PC-3 (cell line): ENCODE measurements at regions of chr10 and their contacts with region 1.

Region 1: GRCh38 chr10:79068562-79069324 is at the start of gene ZMIZ1:
- DNase-seq: peak; percentile 100
- ATAC-seq: peak; percentile 47
- H3K4me3 ChIP-seq: peak within 1 kb of the TSS; percentile 66
- H3K27ac ChIP-seq: peak within 1 kb of the TSS; percentile 3
- H3K4me1 ChIP-seq: peaks cover 34% of the 10 kb centered on the region
- H3K27me3 ChIP-seq: no peaks in the 10 kb centered on the region
- CTCF ChIP-seq: peak; percentile 57
- total RNA-seq, gene ZMIZ1: 55.4 and 84.2 TPM in 2 replicates

Region 2: DNA sequence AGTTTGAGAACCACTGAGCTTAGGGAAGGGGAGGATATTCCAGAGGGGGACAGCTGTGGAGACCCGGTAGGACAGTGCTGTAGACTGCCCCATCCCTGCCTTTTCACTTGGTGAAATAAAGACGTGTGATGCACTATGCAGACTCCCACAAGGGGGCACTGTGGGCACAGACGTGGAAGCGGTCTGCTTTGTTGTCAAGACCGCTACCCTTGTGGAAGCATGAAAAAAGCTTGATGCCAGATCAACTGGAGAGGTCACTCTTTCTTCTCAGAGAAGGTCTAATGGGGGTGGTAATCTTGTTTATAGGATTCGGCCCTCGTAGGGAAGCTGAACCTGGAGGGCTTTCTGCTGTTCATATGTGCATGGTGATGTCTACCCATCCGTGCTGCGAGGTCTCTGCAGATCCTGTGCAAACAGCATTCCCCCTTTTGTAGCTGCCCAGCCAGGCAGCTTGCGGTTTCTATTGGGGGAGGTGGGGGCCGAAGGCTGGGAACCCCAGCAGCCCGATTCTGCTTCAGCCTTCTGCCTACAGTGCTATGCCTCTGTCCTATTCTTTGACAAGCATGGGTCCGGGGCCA is 1021.3 kb before region 1 on chr10:
- CTCF ChIA-PET with region 1: interaction called, 9 read pairs
- POLR2A ChIA-PET with region 1: no interaction called
- intact Hi-C with region 1: loop called (anchors 5 kb)
- DNase-seq: peak; percentile 100
- ATAC-seq: peak; percentile 75
- H3K4me3 ChIP-seq: no peak overlapping the region
- H3K27ac ChIP-seq: no peak overlapping the region
- H3K4me1 ChIP-seq: no peaks in the 10 kb centered on the region
- H3K27me3 ChIP-seq: no peaks in the 10 kb centered on the region
- CTCF ChIP-seq: peak; percentile 100

Region 3: GRCh38 chr10:78605800-78606350 is 462.9 kb before region 1 on chr10:
- CTCF ChIA-PET with region 1: no interaction called
- POLR2A ChIA-PET with region 1: no interaction called
- intact Hi-C with region 1: loop called (anchors 10 kb)
- DNase-seq: peak; percentile 99
- ATAC-seq: peak; percentile 100
- H3K4me3 ChIP-seq: no peak overlapping the region
- H3K27ac ChIP-seq: no peak overlapping the region
- H3K4me1 ChIP-seq: no peaks in the 10 kb centered on the region
- H3K27me3 ChIP-seq: 0 out of 2 replicates have a peak, but pooled peaks cover 5% of the 10 kb centered on the region
- CTCF ChIP-seq: peak; percentile 70

Region 4: GRCh38 chr10:78844960-78845607 is 223.7 kb before region 1 on chr10:
- CTCF ChIA-PET with region 1: no interaction called
- POLR2A ChIA-PET with region 1: no interaction called
- intact Hi-C with region 1: loop called (anchors 2 kb)
- DNase-seq: peak; percentile 53
- ATAC-seq: peak; percentile 53
- H3K4me3 ChIP-seq: no peak overlapping the region
- H3K27ac ChIP-seq: no peak overlapping the region
- H3K4me1 ChIP-seq: no peaks in the 10 kb centered on the region
- H3K27me3 ChIP-seq: 0 out of 2 replicates have a peak, but pooled peaks cover 23% of the 10 kb centered on the region
- CTCF ChIP-seq: peak; percentile 48; the same call in 1 of the 2 replicates

Region 5: DNA sequence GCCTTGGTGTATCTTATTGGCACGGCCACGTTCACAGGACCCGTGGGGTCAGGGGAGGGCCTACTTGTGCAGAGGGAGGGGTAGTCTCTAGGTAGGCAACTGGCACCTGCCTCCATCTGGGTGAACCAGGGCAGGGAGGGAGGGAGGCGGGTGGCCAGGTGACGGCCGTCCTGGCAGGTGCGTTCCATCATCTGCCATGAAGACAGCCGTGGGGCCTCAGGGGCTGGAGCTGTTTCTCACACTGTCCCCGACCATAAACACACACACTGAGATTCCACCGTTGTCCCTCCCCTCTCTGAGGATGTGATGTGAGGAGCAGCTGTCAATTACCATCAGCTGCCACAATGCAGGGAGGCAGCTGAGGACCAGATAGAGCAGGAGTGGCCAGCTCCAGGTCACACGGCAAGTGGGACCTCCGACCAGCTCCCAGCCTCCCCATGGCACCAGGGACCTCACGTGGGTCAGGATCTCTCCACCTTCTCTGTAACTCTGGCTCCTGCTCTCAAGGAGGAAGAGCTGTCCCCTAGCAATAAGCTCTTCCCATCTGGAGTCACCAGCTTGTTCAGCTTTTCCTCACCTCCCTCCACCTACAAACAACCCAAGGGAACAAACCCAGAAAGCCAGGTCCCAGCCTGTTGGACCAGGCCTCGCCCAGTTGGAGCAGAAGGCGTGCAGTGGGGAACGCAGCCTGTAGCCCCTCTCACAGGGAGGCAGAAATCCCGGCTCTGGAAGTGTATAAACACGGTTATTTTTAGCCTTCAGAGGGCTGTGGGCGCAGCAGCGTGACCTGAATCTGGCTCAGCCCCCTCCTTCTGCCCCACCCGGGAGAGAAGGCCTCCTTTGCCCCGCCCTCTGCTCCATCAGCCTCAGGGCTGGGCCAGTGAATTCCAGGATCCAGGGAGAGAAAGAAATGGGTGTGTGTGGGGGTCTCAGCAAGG is 33.1 kb after region 1 on chr10:
- CTCF ChIA-PET with region 1: interaction called, 3 read pairs
- POLR2A ChIA-PET with region 1: interaction called, 5 read pairs
- intact Hi-C with region 1: loop called (anchors 2 kb)
- DNase-seq: no peak
- ATAC-seq: peak; percentile 18
- H3K4me3 ChIP-seq: no peak overlapping the region
- H3K27ac ChIP-seq: no peak overlapping the region
- H3K4me1 ChIP-seq: no peaks in the 10 kb centered on the region
- H3K27me3 ChIP-seq: no peaks in the 10 kb centered on the region
- CTCF ChIP-seq: no peak

Region 6: DNA sequence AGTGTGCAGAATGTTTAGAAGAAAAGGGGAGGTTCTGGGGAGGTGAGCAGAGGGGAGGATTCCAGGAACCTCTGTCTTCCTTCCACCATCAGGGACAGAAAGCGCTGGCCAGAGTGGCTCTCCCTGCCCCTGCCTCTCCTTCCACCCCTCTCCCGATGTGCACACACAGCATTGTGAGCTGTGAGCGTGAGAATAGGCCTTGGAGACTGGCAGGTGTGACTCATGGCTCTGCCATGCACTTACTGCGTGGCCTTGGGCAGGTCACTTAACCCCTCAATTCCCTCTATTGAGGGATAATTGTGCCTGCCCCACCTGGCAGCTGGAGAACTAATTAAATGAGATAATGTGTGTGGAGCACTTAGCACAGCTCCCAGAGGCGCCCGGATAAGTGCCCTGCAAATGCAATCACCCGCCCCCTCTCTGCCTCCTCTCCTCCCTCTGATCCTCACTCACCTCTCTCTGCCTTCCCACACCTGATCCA is 115.4 kb after region 1 on chr10:
- CTCF ChIA-PET with region 1: no interaction called
- POLR2A ChIA-PET with region 1: no interaction called
- intact Hi-C with region 1: loop called (anchors 1 kb)
- DNase-seq: peak; percentile 100
- ATAC-seq: peak; percentile 95
- H3K4me3 ChIP-seq: peak overlapping the region; percentile 2; the same call in 1 of the 2 replicates
- H3K27ac ChIP-seq: peak overlapping the region; percentile 67
- H3K4me1 ChIP-seq: peaks cover 35% of the 10 kb centered on the region
- H3K27me3 ChIP-seq: no peaks in the 10 kb centered on the region
- CTCF ChIP-seq: no peak

Region 7: GRCh38 chr10:79310911-79311573 is 242.3 kb after region 1 on chr10:
- CTCF ChIA-PET with region 1: no interaction called
- POLR2A ChIA-PET with region 1: no interaction called
- intact Hi-C with region 1: no loop called
- DNase-seq: no peak
- ATAC-seq: no peak
- H3K4me3 ChIP-seq: no peak overlapping the region
- H3K27ac ChIP-seq: no peak overlapping the region
- H3K4me1 ChIP-seq: no peaks in the 10 kb centered on the region
- H3K27me3 ChIP-seq: no peaks in the 10 kb centered on the region
- CTCF ChIP-seq: no peak